ENCODE measurements at regions of chr17 and their contacts with region 1.

Region 1: GRCh38 chr17:82775001-82775823 is 23.3 kb downstream of the TBCD start:
- DNase-seq: peak; percentile 85
- ATAC-seq: peak; percentile 62

Region 2: DNA sequence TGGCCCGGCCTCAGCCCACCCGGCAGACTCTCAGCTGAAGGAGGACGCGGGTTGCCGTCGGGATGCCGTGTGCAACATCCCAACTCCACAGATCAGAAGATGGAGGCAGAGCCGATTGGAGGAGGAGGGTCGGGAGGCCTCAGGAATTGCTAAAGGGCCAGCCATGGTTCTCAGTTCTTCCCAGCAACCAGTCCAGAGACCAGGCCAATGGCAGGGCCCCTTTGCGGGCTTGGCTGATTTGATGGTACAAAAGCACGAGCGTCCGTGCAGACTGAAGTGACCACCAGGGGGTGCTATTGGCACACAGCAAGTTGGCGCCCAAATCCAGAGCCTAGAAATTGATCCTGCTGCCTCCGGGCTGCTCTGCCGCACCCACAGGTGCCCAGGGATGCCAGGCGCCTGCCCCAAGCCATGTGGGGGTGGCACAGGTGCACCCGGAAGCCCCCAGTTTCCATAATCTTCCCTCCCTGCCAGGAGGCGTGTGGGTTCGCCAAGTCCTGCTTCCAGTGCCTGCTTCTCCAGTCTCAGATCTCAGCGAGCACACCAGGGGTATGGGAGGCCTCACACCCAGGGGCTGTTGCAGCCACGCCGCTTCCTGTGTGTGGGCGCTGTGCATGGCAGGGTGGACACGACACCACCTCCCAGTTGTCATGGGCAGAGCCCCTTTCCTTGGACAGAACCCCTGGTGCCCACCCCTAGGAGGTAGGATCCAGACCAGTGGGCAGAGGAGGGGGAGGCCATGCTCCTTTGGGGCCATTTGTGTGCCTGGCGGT is 423.3 kb before region 1 on chr17:
- intact Hi-C with region 1: loop called (anchors 10 kb)
- DNase-seq: peak; percentile 89
- ATAC-seq: peak; percentile 74

Region 3: GRCh38 chr17:82583720-82584234 is 191.4 kb before region 1 on chr17:
- intact Hi-C with region 1: no loop called
- DNase-seq: no peak
- ATAC-seq: no peak

Region 4: DNA sequence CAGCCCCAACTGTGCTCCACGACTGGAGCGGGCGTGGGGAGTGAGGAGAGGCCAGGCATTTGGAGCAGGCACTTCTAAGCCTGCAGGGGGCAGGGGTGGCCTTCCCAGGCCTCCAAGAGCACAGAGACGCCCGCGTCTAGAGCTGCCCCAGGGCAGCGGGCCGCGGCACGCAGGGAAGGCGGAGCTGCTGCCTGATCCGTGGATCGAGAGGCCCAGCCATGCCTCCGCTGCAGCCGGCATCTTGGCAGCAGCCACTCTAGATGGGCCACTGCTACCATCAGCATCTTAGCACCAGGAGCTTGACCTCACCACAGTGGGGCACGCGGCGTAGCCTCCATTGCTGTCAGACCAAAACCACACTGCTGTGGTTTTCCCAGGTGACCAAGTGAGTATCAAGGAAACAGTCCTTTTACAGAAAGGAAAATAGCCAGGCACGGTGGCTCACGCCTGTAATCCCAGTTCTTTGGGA is 106.5 kb before region 1 on chr17:
- intact Hi-C with region 1: loop called (anchors 2 kb)
- DNase-seq: peak; percentile 79
- ATAC-seq: peak; percentile 87

Region 5: GRCh38 chr17:82816358-82817149 is 41.3 kb after region 1 on chr17:
- intact Hi-C with region 1: no loop called
- DNase-seq: no peak
- ATAC-seq: no peak

Region 6: GRCh38 chr17:82859431-82860403 is 84.5 kb after region 1 on chr17:
- intact Hi-C with region 1: no loop called
- DNase-seq: peak; percentile 77
- ATAC-seq: peak; percentile 46